Psoas muscle (tissue), 8 donors: ENCODE measurements at regions of chr13 and their contacts with region 1.

Region 1: GRCh38 chr13:75876360-75877050 is 240.4 kb downstream of the LMO7 start:
- DNase-seq: peak in 1 of 2 donors; percentile 27
- ATAC-seq: peak; percentile 68 to 94 (median 84)
- H3K4me3 ChIP-seq: no peak overlapping the region
- H3K27ac ChIP-seq: no peak overlapping the region
- H3K4me1 ChIP-seq: peaks cover 3% of the 10 kb centered on the region
- H3K27me3 ChIP-seq: no peaks in the 10 kb centered on the region
- CTCF ChIP-seq: peak; percentile 96

Region 2: GRCh38 chr13:74346960-74347359 is 1529.5 kb before region 1 on chr13:
- intact Hi-C with region 1: no loop called
- DNase-seq: no peak
- ATAC-seq: no peak
- H3K4me3 ChIP-seq: no peak overlapping the region
- H3K27ac ChIP-seq: no peak overlapping the region
- H3K4me1 ChIP-seq: no peaks in the 10 kb centered on the region
- H3K27me3 ChIP-seq: peaks cover 0 to 3% (median 0%) of the 10 kb centered on the region in 3 donors
- CTCF ChIP-seq: no peak

Region 3: GRCh38 chr13:74778946-74779345 is 1097.6 kb before region 1 on chr13:
- intact Hi-C with region 1: no loop called
- DNase-seq: no peak
- ATAC-seq: no peak
- H3K4me3 ChIP-seq: no peak overlapping the region
- H3K27ac ChIP-seq: no peak overlapping the region
- H3K4me1 ChIP-seq: no peaks in the 10 kb centered on the region
- H3K27me3 ChIP-seq: no peaks in the 10 kb centered on the region
- CTCF ChIP-seq: no peak

Region 4: GRCh38 chr13:75587679-75588078 is 288.8 kb before region 1 on chr13:
- intact Hi-C with region 1: no loop called
- DNase-seq: no peak
- ATAC-seq: no peak
- H3K4me3 ChIP-seq: no peak overlapping the region
- H3K27ac ChIP-seq: no peak overlapping the region
- H3K4me1 ChIP-seq: peaks cover 4% of the 10 kb centered on the region
- H3K27me3 ChIP-seq: no peaks in the 10 kb centered on the region
- CTCF ChIP-seq: no peak

Region 5: DNA sequence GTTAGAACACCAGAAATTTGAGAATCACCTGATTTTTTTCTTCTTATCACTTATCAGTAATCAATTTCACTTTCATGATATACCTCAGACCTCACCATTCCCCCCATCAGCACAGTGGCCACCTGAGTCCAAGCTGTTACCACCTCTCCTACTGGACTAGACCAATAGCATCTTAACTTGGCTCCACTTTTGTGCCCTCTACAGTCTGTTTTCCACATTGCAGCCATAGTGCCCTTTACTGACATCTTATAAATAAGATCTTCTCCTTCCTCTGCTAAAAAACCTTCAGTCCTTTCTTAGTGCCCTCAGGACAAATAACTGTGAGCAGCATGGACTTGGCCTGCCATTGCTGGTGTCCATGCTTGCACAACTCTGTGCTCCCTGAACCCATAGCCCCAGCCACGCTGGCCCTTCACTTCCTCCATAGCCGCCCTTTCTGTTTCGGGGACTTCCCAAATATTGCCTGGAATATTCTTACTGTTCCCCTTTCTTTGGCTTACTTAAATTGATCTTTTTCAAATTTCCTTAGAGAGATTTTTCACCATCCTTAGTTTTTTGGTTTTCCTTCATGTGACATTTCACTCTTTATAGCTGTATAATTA is 140.4 kb after region 1 on chr13:
- intact Hi-C with region 1: loop called in 1 of 2 experiments (anchors 2 kb)
- DNase-seq: no peak
- ATAC-seq: peak in 2 of 4 donors; percentile 34 to 49
- H3K4me3 ChIP-seq: no peak overlapping the region
- H3K27ac ChIP-seq: no peak overlapping the region
- H3K4me1 ChIP-seq: no peaks in the 10 kb centered on the region
- H3K27me3 ChIP-seq: no peaks in the 10 kb centered on the region
- CTCF ChIP-seq: no peak

Region 6: DNA sequence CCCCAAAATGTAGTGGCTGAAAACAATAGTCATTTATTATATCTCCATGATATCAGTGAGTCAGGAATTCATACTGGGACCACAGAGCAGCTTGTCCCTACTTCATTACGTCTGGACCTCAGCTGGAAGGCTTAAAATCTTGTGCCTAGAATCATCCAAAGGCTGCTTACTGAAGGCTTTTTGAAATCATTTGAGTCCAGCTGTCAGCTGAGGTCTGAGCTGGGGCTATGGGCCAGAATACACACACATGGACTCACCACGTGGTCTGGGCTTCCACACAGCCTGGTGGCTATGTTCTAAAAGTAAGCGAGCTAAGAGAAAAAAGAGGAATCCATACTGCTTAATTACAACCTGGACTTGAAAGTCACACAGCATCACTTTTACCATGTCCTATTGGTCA is 800.5 kb after region 1 on chr13:
- intact Hi-C with region 1: no loop called
- DNase-seq: peak; percentile 25 to 64
- ATAC-seq: peak; percentile 28 to 61 (median 34)
- H3K4me3 ChIP-seq: no peak overlapping the region
- H3K27ac ChIP-seq: no peak overlapping the region
- H3K4me1 ChIP-seq: no peaks in the 10 kb centered on the region
- H3K27me3 ChIP-seq: no peaks in the 10 kb centered on the region
- CTCF ChIP-seq: no peak